ENCODE measurements at regions of chr10 and their contacts with region 1.

Region 1: DNA sequence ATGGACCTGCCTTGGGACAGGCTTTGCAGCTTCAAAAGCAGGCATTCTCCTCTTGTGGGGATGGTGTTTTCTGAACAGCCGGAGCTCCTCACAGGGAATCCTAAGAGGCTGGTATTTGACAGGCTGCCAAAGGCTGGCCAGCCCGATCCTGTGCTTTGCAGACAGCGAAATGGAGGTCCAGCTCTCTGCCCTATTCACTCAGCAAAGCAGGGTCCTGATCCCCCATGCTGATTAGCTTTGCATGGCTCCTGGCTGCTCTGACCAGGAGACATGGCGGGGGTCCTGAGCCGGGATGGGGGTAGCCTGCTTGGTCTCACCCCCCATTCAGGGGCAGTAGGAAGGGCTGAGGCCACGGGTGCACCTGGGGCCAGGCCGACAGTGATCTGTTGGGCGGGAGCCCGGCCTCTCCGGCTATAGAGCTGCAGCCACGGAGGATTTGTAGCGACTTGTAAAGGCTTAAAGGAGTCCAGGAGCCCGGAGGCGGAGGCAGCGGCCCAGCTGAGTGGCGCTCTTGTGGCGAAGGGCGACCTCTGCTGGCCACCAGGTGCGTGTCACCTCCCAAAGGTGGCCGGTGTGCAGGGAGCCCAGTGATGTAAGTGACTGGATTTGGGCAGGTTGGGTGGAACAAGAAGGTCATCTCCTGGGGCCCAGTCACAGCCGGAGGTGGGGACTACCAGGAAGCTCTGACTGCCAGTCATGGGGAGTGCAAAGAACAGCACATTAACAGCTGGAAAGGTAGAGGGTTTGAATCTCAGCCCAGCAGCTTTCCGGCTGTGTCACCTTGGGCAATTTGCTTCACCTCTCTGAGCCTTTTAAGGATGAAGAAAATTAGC is 126.5 kb downstream of the ZMIZ1 start:
- DNase-seq: peak; percentile 86 to 89 (median 88)
- ATAC-seq: peak; percentile 92 to 95 (median 92)
- H3K4me3 ChIP-seq: no peak overlapping the region
- H3K27ac ChIP-seq: peak overlapping the region in 1 of 3 donors; percentile 42
- H3K4me1 ChIP-seq: peaks cover 0 to 11% (median 4%) of the 10 kb centered on the region in 4 donors
- H3K27me3 ChIP-seq: no peaks in the 10 kb centered on the region
- CTCF ChIP-seq: peak; percentile 95 to 99 (median 97)
- POLR2A ChIP-seq: no peak

Region 2: DNA sequence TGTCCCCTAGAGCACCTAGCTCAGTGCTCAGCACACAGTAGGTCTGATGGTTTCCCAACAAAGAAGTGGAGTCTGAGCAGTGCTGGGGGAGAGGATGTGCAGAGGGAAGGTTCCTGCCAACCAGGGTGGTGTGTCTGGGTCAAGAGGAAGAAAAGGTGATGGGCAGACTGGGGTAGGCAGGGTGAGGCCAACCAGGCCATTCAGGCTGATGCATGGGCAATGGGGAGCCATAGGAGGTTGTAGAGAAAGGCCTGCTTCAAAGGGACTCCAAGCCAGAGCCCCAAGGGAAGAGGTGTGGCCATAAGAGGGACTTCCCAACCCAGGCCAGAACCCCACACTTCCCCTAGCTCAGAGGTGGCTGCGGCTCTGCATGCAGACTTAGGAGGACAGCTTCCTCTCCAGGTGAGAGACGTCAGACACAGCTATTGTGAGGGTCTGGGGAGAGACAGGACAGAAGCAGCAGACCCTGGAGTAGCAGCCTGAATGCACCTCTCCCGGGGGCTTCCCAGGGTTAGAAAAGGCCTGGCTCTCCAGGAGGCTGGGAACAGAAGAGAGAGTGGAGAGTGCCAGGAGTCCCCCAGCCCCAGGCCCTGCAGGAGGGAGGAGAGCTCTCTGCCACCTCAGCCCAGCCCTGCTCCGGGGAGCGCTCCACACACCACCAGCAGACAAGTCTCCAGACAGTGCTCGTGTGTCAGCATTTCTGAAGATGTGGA is 213.9 kb before region 1 on chr10:
- intact Hi-C with region 1: loop called in 1 of 2 experiments (anchors 10 kb)
- DNase-seq: no peak
- ATAC-seq: no peak
- H3K4me3 ChIP-seq: no peak overlapping the region
- H3K27ac ChIP-seq: no peak overlapping the region
- H3K4me1 ChIP-seq: peaks cover 0 to 23% (median 5%) of the 10 kb centered on the region in 4 donors
- H3K27me3 ChIP-seq: no peaks in the 10 kb centered on the region
- CTCF ChIP-seq: no peak
- POLR2A ChIP-seq: no peak

Region 3: DNA sequence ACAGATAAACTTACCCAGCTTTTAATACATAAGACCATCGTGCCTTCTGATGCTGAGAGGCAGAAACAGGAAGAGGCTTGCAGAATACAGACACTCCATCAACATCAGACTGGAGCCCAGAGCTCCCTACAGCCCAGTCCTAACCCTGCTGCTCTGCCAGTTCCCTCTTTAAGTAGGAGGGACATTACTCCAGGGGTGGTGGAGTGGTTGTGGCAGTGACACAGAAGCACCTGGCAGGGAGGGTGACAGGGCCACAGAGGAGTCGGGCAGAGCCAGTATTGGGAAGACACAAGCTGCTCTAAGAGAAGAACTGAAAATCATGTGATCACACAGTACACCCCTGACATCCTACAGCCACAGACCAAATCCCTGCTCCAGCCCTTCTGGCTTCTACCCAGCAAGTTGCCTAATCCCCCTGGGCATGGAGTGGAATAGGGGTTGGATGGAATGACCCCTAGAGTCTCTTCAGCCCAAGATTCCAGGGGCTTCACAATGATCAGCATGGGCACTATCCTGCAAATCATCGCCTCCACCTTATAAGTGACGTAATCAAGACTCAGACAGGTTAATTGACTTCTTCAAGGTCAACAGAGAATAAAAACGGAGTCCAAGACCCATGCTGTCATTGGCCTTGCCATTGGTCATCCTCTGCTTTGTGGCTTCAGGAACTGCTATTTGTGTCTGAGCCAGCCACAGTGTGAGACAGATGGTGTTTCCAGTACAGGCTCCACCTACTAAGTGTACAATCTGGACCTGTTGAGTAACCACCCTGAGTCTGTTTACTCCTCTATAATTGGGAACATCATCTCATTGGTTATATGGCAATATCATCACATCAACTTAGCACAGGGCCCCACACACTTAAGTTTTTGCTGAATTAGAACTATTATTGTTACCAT is 187.6 kb before region 1 on chr10:
- intact Hi-C with region 1: no loop called
- DNase-seq: no peak
- ATAC-seq: peak in 3 of 4 donors; percentile 74 to 83 (median 75)
- H3K4me3 ChIP-seq: no peak overlapping the region
- H3K27ac ChIP-seq: no peak overlapping the region
- H3K4me1 ChIP-seq: peaks cover 0 to 5% (median 0%) of the 10 kb centered on the region in 4 donors
- H3K27me3 ChIP-seq: no peaks in the 10 kb centered on the region
- CTCF ChIP-seq: no peak
- POLR2A ChIP-seq: no peak

Region 4: DNA sequence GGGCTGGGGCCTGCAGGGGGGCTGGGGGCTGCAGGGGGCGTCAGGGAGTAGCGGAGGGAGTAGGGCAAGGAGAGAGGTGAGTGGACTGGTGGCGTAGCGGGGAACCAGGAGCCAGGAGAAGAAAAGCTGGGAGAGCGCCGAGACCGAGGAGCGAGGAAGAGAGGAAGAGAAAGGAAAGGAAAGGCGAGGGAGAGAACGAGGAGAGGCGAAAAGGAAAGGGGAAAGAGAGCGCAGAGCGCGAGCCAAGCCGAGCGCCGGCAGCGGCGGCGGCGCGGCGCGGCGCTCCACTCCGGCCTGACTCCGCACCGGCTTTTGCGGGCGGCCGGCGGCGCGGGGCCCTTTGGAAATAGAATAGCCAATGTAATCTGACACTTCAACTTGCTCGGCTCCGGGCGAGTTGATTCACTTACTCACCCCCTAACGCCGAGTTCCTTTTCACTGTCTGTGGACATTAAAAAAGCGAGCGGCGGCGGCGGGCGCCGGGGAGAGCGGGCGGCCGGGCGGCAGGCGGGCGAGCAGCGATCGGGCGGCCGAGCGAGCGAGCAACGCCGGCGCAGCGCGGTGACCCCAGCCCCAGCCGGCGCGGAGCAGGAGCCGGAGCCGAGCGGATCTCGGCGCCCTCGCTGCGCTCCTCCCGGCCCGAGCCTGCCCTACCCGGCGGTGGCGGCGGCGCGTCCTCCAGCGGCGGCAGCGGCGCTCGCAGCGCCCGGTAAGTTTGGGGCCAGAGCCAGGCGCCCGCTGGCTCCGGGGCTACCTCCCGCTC is 126.6 kb before region 1 on chr10 and contains the start of gene ZMIZ1:
- intact Hi-C with region 1: loop called in 1 of 2 experiments (anchors 10 kb)
- DNase-seq: peak; percentile 89 to 92 (median 89)
- ATAC-seq: peak; percentile 50 to 58 (median 54)
- H3K4me3 ChIP-seq: peak within 1 kb of the TSS; percentile 87 to 96 (median 89)
- H3K27ac ChIP-seq: peak within 1 kb of the TSS; percentile 90 to 96 (median 92)
- H3K4me1 ChIP-seq: peaks cover 0 to 36% (median 12%) of the 10 kb centered on the region in 4 donors
- H3K27me3 ChIP-seq: no peaks in the 10 kb centered on the region
- CTCF ChIP-seq: peak; percentile 15 to 59 (median 28)
- POLR2A ChIP-seq: peak; percentile 93
- total RNA-seq, gene ZMIZ1: 9.9 to 22.8 (median 12.3) TPM

Region 5: GRCh38 chr10:79084012-79084971 is 111.0 kb before region 1 on chr10:
- intact Hi-C with region 1: loop called in 1 of 2 experiments (anchors 10 kb)
- DNase-seq: peak; percentile 92 to 94 (median 93)
- ATAC-seq: peak; percentile 65 to 76 (median 70)
- H3K4me3 ChIP-seq: no peak overlapping the region
- H3K27ac ChIP-seq: peak overlapping the region; percentile 47 to 58 (median 57)
- H3K4me1 ChIP-seq: peaks cover 0 to 75% (median 45%) of the 10 kb centered on the region in 4 donors
- H3K27me3 ChIP-seq: no peaks in the 10 kb centered on the region
- CTCF ChIP-seq: no peak
- POLR2A ChIP-seq: no peak

Region 6: DNA sequence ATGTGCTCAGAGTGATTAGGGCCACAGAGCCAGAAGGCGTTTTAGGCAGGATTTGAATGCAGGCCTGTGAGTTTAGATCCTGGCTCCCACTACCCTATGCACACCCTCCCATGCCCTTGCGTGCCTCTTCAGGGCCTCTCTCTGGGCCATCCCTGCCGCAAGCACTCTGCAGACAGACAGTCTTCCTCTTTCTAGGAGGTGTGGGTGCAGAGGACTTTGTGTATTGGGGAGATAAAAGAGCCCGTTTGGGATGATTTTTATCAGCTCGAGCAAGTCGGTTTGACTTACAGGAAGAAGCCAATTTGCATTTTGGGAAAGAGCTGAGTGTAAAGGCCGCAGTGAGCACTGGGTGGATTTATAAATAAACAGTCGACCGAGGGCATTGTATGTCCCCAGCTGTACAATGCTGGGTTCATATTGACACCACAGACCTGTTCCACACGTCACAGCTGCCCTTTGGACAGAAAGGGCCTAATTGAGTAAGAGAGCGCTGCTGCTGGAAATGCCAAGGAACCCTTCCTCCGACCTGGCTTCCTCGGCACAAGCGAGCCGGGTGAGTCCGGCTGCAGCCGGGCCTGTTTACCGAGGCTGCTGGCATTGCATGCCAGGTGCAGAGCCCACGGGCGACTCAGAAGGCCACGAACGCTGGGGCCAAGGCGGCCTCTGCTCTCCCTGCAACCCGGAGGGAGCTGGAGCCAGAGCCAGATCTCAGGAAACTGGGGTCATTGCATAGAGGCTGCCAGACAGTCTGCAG is 101.5 kb before region 1 on chr10:
- intact Hi-C with region 1: loop called (anchors 10 kb)
- DNase-seq: peak; percentile 82 to 95 (median 92)
- ATAC-seq: peak; percentile 81 to 90 (median 86)
- H3K4me3 ChIP-seq: peak overlapping the region in 1 of 3 donors; percentile 8
- H3K27ac ChIP-seq: peak overlapping the region; percentile 77 to 92 (median 78)
- H3K4me1 ChIP-seq: peaks cover 0 to 73% (median 33%) of the 10 kb centered on the region in 4 donors
- H3K27me3 ChIP-seq: no peaks in the 10 kb centered on the region
- CTCF ChIP-seq: no peak
- POLR2A ChIP-seq: peak; percentile 17

Measured in right lobe of liver (tissue), 6 donors.